ENCODE measurements at regions of chr11 and their contacts with region 1.

Region 1: DNA sequence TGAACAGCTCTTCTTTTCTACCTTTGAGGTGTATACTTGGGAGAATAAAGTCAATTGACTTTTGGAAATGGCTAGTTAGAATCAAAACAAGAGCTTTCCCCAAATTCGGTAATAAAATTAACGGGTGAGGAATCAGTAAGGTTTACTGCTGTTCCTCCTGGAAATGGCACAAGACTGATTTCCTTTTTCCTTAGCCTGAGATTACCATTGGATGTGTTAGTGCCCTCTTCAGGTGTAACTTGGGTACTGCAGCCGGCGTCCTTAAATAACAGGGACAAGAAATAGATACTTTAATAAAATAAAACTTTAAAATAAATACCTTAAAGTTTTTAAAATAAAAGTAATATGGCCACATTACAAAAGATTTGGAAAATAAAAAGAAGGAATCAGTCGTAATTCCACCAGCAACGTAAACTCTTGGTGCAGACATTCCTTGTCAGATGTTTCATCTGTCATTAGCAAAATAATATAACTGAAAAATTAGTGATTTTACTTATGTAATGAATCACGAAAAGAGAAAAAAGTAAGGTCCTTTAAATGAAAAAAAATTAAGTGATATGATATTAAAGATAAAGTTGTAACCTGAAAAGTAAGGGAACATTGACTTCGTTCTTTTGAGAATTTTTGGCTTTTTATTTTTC is 29.7 kb downstream of the ZFTA start:
- DNase-seq: peak; percentile 58
- H3K4me3 ChIP-seq: no peak overlapping the region
- H3K27ac ChIP-seq: no peak overlapping the region
- H3K4me1 ChIP-seq: peaks cover 4% of the 10 kb centered on the region
- H3K27me3 ChIP-seq: no peaks in the 10 kb centered on the region
- CTCF ChIP-seq: peak; percentile 89 to 97

Region 2: DNA sequence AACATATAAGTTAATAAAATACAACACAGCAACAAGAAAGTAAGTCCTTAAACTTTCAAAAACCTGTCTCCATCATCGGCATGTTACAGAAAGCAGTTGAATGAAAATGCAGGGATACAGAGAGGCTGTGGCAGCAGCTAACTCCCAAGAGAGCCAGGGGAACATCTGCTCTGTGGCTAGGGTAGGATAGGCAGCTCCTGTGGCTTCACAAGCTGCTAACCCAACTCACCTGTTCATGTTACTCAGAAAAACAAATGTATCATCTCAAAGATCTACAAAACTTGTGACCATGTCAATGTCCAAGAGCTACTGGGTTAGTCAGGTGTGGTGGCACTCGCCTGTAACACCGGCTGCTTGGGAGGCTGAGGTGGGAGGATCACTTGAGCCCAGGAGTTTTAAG is 109.4 kb before region 1 on chr11:
- CTCF ChIA-PET with region 1: no interaction called
- dilution Hi-C with region 1: loop called (anchors 5 kb)
- in situ Hi-C with region 1: no loop called
- intact Hi-C with region 1: no loop called
- DNase-seq: no peak
- H3K4me3 ChIP-seq: no peak overlapping the region
- H3K27ac ChIP-seq: no peak overlapping the region
- H3K4me1 ChIP-seq: no peaks in the 10 kb centered on the region
- H3K27me3 ChIP-seq: no peaks in the 10 kb centered on the region
- CTCF ChIP-seq: no peak

Region 3: DNA sequence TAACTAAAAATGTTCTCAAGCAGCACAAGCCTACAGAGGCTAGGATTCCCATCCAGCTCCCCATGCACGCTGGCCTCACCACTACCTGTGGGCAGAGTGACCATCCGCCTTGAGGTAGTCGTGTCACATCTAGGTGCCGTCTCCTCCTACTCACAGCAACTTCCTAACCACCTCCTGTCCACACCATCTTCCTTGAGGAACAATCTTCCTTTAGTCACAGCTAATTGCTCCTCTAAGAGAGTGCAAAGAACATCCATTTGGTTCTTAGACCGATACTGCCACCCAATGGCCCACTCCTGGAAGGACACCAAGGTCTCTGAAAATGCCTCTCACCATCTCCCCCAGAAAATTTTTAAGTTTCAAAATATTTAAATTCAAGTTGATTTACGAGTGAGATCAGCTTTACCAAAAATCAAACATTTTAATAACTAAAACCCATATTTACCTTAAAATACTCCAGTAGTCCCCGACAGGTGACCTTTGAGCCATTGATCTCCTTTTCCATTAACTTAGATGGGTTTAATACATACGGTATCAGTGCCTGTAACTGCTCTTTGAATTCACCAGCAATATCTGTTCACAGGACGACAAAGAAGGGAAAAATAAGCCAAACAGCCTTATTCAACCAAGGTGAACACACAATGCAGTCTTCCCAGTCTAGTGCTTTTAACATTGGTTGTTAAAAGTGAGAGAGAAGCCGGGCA is 102.9 kb before region 1 on chr11:
- CTCF ChIA-PET with region 1: no interaction called
- dilution Hi-C with region 1: no loop called
- in situ Hi-C with region 1: no loop called
- intact Hi-C with region 1: loop called (anchors 1 kb)
- DNase-seq: peak; percentile 37
- H3K4me3 ChIP-seq: no peak overlapping the region
- H3K27ac ChIP-seq: no peak overlapping the region
- H3K4me1 ChIP-seq: no peaks in the 10 kb centered on the region
- H3K27me3 ChIP-seq: no peaks in the 10 kb centered on the region
- CTCF ChIP-seq: peak; percentile 62 to 79

Region 4: GRCh38 chr11:63671322-63672155 is 67.3 kb before region 1 on chr11 and contains the start of gene ATL3:
- CTCF ChIA-PET with region 1: no interaction called
- dilution Hi-C with region 1: no loop called
- in situ Hi-C with region 1: no loop called
- intact Hi-C with region 1: loop called (anchors 1 kb)
- DNase-seq: peak; percentile 95
- H3K4me3 ChIP-seq: peak within 1 kb of the TSS; percentile 80 to 90 (median 81)
- H3K27ac ChIP-seq: peak within 1 kb of the TSS; percentile 95
- H3K4me1 ChIP-seq: peaks cover 38% of the 10 kb centered on the region
- H3K27me3 ChIP-seq: no peaks in the 10 kb centered on the region
- CTCF ChIP-seq: peak in 1 of 2 donors; percentile 24
- total RNA-seq, gene ATL3: 63.7 to 163 TPM

Region 5: DNA sequence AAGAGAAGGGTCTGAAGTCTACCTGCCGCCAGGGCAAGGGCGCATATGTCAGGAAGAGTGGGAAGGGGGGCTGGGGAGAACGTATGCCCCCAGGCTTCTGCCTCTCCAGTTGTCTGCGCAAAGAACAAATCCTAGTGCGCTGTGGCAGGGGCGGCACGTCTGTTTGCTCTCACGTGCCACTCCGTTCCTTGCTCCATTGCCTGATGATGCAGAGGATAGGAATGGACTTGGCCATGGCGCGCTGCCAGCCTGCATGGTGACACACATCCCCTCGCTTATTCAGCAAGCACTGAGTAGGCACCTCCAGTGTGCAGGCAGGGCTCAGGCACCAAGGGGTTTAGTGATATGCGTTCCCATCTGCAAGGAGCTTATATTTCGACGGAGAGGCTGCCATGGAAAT is 806.8 kb after region 1 on chr11:
- CTCF ChIA-PET with region 1: no interaction called
- dilution Hi-C with region 1: no loop called
- in situ Hi-C with region 1: no loop called
- intact Hi-C with region 1: no loop called
- DNase-seq: peak; percentile 75
- H3K4me3 ChIP-seq: no peak overlapping the region
- H3K27ac ChIP-seq: no peak overlapping the region
- H3K4me1 ChIP-seq: peaks cover 50% of the 10 kb centered on the region
- H3K27me3 ChIP-seq: no peaks in the 10 kb centered on the region
- CTCF ChIP-seq: no peak